ENCODE measurements at regions of chr1 and their contacts with region 1.

Region 1: DNA sequence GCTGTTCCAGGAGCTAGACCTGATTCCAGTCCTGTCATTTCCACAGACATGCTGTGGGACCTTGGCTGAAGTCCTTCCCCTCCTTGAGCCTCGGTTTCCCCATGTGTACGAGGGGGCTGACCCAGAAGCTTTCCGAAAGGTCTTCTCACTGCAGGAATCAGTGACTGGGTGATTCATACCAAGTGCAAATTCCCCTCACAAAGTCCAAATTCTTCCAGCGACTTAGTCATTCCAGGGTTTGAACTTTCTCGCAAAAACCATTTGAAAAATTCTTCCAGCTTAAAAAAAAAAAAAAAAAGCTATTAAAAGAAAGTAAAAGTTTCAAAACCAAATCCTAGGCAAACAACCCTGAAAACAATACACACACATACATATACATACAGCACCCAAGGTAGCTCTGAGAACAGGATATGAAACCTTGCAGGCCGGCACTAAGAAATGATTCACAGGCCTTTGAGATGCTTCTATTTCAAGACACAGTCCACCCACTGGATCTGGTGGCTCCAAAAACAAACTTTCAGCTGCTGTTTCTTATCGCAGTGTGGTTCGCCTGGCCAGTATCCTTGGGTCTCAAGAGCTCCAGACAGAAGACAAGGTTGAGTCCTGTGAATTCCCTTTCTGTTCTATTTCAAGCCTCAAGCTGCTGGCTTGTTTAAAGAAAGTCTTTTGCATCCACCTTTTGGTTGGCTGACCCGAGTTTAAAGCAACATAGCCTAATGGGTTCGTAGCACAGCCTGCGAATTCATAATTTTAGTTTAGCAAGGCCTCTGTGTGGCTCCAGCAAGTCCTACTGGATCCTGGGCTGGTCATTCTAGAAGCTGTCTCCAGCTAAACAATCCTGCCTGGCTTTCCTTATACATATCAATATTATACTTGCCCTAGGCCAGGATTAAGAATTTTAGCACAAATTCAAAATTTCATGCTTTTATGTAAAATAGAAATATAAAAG is 18.0 kb upstream of the ID3 start:
- DNase-seq: peak; percentile 60
- H3K4me3 Mint-ChIP-seq: peak overlapping the region; percentile 49
- H3K27ac Mint-ChIP-seq: peak overlapping the region; percentile 92
- H3K4me1 Mint-ChIP-seq: peaks cover 22% of the 10 kb centered on the region
- H3K27me3 Mint-ChIP-seq: no peaks in the 10 kb centered on the region
- CTCF ChIP-seq: no peak

Region 2: DNA sequence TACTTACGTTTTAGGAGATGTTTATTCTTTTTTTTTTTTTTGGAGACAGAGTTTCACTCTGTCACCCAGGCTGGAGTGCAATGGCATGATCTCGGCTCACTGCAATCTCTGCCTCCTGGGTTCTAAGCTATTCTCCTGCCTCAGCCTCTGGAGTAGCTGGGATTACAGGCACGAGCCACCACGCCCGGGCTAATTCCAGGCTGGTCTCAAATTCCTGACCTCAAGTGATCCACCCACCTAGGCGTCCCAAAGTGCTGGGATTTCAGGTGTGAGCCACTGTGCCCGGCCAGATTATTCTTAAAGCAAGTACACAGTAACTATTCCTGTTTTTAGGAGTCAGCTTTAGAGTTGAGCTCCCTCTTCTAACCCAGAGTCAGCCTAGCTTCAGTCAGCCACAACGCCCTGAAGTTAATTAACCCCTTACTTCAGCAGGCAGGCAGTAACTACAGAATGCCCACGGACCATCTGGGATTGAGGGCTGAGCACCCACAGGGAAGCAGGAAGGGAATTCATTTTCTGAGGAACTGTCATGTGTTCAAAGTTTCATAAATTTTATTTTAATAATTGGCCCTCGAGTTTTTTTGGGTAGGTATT is 12.7 kb before region 1 on chr1:
- CTCF ChIA-PET with region 1: interaction called, 17 read pairs
- POLR2A ChIA-PET with region 1: interaction called, 131 read pairs
- intact Hi-C with region 1: no loop called
- DNase-seq: no peak
- H3K4me3 Mint-ChIP-seq: no peak overlapping the region
- H3K27ac Mint-ChIP-seq: no peak overlapping the region
- H3K4me1 Mint-ChIP-seq: peaks cover 29% of the 10 kb centered on the region
- H3K27me3 Mint-ChIP-seq: peaks cover 12% of the 10 kb centered on the region
- CTCF ChIP-seq: no peak

Region 3: DNA sequence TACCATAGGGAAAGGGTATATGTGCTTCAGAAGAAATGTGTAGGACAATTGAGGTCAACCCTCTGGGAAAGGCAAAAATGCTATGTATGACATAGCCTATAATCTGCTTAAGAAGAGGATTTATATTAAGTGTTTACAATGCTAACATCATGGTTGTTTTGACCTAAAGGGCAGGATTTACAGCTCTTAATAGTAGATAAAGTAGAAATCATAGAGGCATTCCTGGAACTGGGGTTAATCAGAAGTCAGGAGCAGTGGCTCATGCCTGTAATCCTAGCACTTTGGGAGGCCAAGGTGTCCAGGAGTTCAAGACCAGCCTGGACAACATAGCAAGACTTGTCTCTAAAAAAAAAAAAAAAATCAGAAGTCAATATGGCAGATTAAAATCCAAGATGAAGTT is 105.6 kb after region 1 on chr1:
- CTCF ChIA-PET with region 1: no interaction called
- POLR2A ChIA-PET with region 1: no interaction called
- intact Hi-C with region 1: no loop called
- DNase-seq: no peak
- H3K4me3 Mint-ChIP-seq: no peak overlapping the region
- H3K27ac Mint-ChIP-seq: no peak overlapping the region
- H3K4me1 Mint-ChIP-seq: no peaks in the 10 kb centered on the region
- H3K27me3 Mint-ChIP-seq: peaks cover 42% of the 10 kb centered on the region
- CTCF ChIP-seq: no peak